B cell (primary cell): ENCODE measurements at regions of chr4 and their contacts with region 1.

Region 1: DNA sequence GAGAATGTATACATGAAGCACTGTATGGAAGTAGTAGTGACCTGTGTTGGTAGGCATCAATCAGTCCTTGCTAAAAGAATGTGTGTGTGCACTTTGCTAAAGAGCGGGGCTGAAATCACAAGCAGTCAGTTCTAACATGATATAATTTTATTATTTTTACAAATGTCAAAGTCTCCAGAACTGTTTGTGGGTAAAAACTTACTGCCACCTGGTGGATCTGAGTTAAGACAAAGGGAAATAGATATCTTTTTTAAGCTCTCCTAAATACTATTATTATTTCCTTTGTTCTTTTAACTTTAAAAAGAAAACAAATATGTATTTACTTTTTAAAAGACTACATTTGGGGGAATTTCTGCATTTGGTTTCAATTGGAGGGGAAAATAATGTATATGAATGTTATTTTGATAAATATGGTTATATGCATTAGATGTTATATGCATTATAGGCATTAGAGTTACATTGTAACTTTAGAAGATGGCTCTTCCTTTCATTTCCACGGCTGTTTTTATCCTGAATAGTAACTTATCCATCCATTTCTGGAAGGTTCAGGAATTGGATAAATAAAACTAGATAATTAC is 7.8 kb upstream of the CLOCK start:
- DNase-seq: peak; percentile 34
- ATAC-seq: no peak
- H3K4me3 ChIP-seq: no peak overlapping the region
- H3K4me3 Mint-ChIP-seq: no peak overlapping the region
- H3K27ac ChIP-seq: no peak overlapping the region
- H3K27ac Mint-ChIP-seq: no peak overlapping the region
- H3K4me1 ChIP-seq: no peaks in the 10 kb centered on the region
- H3K4me1 Mint-ChIP-seq: no peaks in the 10 kb centered on the region
- H3K27me3 ChIP-seq: peaks cover 0 to 2% (median 0%) of the 10 kb centered on the region in 4 experiments
- H3K27me3 Mint-ChIP-seq: peaks cover 10% of the 10 kb centered on the region
- CTCF ChIP-seq: peak; percentile 62

Region 2: DNA sequence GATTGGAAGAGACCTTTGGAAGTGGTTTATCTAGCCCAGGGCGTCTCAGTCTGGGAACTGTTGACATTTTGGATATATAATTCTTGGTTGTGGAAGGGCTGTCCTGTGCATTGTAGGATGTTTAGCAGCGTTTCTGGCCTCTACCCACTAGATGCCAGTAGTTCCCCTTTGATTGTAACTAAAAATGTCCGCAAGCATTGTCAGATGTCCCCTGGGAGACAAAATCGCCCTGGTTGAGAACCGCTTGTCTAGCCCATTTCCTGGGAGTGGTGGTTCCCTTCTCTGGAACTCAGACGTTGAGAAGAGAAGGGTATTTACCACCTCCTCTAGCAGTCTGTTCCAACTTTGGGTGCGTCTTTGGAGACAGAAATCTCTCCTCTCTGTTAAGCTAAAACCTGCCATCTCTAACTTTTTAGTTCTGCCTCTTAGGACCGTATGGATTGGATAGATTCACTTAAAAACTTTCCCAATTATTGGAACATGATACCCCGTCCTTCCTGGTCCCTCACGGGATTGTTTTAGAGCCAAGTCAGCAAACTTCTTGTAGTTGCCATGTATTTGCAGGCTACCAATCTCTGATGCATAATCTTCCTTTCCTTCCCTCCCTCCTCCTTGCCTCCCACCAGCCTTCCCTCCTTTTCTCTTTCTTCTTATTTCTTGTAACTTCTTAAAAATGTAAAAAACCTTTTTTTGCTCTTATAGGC is 144.9 kb before region 1 on chr4:
- CTCF ChIA-PET with region 1: interaction called, 17 read pairs
- POLR2A ChIA-PET with region 1: no interaction called
- intact Hi-C with region 1: loop called (anchors 1 kb)
- DNase-seq: peak; percentile 85
- ATAC-seq: peak; percentile 93
- H3K4me3 ChIP-seq: no peak overlapping the region
- H3K4me3 Mint-ChIP-seq: peak overlapping the region; percentile 36
- H3K27ac ChIP-seq: peak overlapping the region in 1 of 2 donors; percentile 77
- H3K27ac Mint-ChIP-seq: peak overlapping the region; percentile 71
- H3K4me1 ChIP-seq: peaks cover 14% of the 10 kb centered on the region in 2 donors
- H3K4me1 Mint-ChIP-seq: peaks cover 30% of the 10 kb centered on the region
- H3K27me3 ChIP-seq: no peaks in the 10 kb centered on the region
- H3K27me3 Mint-ChIP-seq: no peaks in the 10 kb centered on the region
- CTCF ChIP-seq: peak; percentile 73

Region 3: GRCh38 chr4:55444827-55445226 is 109.7 kb before region 1 on chr4:
- CTCF ChIA-PET with region 1: interaction called, 10 read pairs
- POLR2A ChIA-PET with region 1: no interaction called
- intact Hi-C with region 1: no loop called
- DNase-seq: peak; percentile 8
- ATAC-seq: no peak
- H3K4me3 ChIP-seq: no peak overlapping the region
- H3K4me3 Mint-ChIP-seq: no peak overlapping the region
- H3K27ac ChIP-seq: no peak overlapping the region
- H3K27ac Mint-ChIP-seq: no peak overlapping the region
- H3K4me1 ChIP-seq: no peaks in the 10 kb centered on the region
- H3K4me1 Mint-ChIP-seq: peaks cover 2% of the 10 kb centered on the region
- H3K27me3 ChIP-seq: no peaks in the 10 kb centered on the region
- H3K27me3 Mint-ChIP-seq: no peaks in the 10 kb centered on the region
- CTCF ChIP-seq: no peak

Region 4: DNA sequence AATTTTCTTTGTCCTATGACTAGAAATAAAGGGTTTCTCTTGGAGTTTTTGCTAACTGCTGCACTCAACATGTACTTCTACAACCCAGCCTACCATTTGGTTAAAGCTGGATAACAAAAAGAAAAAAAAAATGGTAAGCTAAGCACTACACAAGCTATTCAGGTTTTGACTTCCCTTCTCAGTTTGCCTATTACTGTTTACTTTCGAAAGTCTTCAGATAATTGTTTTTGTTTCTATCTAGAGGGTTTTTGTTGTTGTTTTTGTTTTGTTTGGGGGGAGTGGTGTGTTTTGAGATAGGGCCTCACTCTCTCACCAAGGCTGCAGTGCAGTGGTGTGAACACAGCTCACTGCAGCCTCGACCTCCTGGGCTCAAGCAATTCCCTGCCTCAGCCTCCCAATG is 54.5 kb before region 1 on chr4:
- CTCF ChIA-PET with region 1: no interaction called
- POLR2A ChIA-PET with region 1: no interaction called
- intact Hi-C with region 1: no loop called
- DNase-seq: no peak
- ATAC-seq: no peak
- H3K4me3 ChIP-seq: no peak overlapping the region
- H3K4me3 Mint-ChIP-seq: no peak overlapping the region
- H3K27ac ChIP-seq: no peak overlapping the region
- H3K27ac Mint-ChIP-seq: no peak overlapping the region
- H3K4me1 ChIP-seq: no peaks in the 10 kb centered on the region
- H3K4me1 Mint-ChIP-seq: peaks cover 2% of the 10 kb centered on the region
- H3K27me3 ChIP-seq: no peaks in the 10 kb centered on the region
- H3K27me3 Mint-ChIP-seq: no peaks in the 10 kb centered on the region
- CTCF ChIP-seq: no peak

Region 5: DNA sequence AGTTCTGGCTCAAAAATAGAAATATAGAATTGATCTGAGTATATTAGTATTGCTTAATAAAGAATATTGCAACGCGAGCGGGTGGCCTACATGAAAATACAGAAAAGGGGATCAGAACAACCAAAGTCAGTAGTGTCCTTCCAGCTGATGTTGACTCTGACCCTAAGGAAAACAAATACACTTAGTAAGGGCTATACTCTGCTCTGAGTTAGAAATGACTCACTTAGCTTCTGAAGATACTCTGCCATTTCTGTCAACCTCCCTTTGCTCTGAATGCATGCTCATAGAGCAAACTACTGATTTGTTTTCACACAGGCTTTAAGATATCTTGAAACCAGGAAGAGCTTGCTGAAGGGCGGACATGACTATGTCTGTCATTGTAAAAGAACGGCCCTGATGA is 104.1 kb after region 1 on chr4:
- CTCF ChIA-PET with region 1: no interaction called
- POLR2A ChIA-PET with region 1: no interaction called
- intact Hi-C with region 1: no loop called
- DNase-seq: no peak
- ATAC-seq: no peak
- H3K4me3 ChIP-seq: no peak overlapping the region
- H3K4me3 Mint-ChIP-seq: no peak overlapping the region
- H3K27ac ChIP-seq: no peak overlapping the region
- H3K27ac Mint-ChIP-seq: no peak overlapping the region
- H3K4me1 ChIP-seq: no peaks in the 10 kb centered on the region
- H3K4me1 Mint-ChIP-seq: no peaks in the 10 kb centered on the region
- H3K27me3 ChIP-seq: peaks cover 0 to 2% (median 0%) of the 10 kb centered on the region in 4 experiments
- H3K27me3 Mint-ChIP-seq: peaks cover 7% of the 10 kb centered on the region
- CTCF ChIP-seq: no peak

Region 6: DNA sequence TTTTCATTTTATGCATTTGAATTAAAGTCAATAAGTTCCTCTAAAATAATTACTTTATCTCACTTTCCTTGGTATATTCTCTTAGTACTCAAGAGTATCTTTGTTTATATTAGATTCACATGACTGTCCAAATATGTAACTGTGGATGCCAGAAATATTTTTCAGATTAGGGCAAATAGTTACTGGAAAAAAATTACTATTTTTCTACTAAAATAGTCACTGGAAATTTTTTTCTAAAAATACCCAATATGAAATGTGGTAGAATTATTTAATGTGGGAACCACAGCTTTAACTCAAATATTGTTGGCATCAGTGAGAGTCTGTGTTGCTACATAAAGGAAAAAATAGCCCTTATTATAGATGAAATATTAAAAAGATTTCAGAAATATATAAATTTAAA is 152.0 kb after region 1 on chr4:
- CTCF ChIA-PET with region 1: no interaction called
- POLR2A ChIA-PET with region 1: no interaction called
- intact Hi-C with region 1: no loop called
- DNase-seq: no peak
- ATAC-seq: no peak
- H3K4me3 ChIP-seq: no peak overlapping the region
- H3K4me3 Mint-ChIP-seq: no peak overlapping the region
- H3K27ac ChIP-seq: no peak overlapping the region
- H3K27ac Mint-ChIP-seq: no peak overlapping the region
- H3K4me1 ChIP-seq: no peaks in the 10 kb centered on the region
- H3K4me1 Mint-ChIP-seq: no peaks in the 10 kb centered on the region
- H3K27me3 ChIP-seq: peaks cover 0 to 7% (median under 1%) of the 10 kb centered on the region in 4 experiments
- H3K27me3 Mint-ChIP-seq: peaks cover 13% of the 10 kb centered on the region
- CTCF ChIP-seq: no peak